ENCODE measurements at regions of chr1 and their contacts with region 1.

Region 1: GRCh38 chr1:17236779-17237560 is 11.9 kb upstream of the PADI3 start:
- DNase-seq: peak; percentile 77 to 97
- H3K4me3 ChIP-seq: no peak overlapping the region
- CTCF ChIP-seq: peak in 1 of 3 donors; percentile 88
- POLR2A ChIP-seq: no peak

Region 2: GRCh38 chr1:17059739-17060460 is 177.1 kb before region 1 on chr1:
- intact Hi-C with region 1: loop called (anchors 10 kb)
- DNase-seq: peak in 1 of 2 donors; percentile 25
- H3K4me3 ChIP-seq: no peak overlapping the region
- CTCF ChIP-seq: no peak
- POLR2A ChIP-seq: no peak

Region 3: DNA sequence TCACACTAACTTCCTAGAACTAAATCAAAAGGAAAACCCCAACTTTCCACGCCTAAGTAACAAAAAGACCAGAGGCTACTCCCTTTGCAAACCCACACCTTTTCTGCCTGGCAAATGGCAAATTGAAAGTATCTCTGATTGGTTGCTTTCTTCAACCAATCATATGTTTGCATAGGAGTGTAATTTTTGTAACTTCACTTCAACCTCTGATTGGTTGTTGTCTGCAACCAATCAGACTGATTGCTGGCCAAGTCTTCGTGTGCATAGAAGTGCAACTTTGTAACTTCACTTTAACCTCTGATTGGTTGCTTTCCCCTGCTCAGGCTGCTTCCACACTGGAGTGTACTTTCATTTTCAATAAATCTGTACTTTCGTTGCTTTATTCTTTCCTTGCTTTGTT is 80.9 kb before region 1 on chr1:
- intact Hi-C with region 1: no loop called
- DNase-seq: no peak
- H3K4me3 ChIP-seq: no peak overlapping the region
- CTCF ChIP-seq: no peak
- POLR2A ChIP-seq: no peak